ENCODE measurements at regions of chr16 and their contacts with region 1.

Region 1: DNA sequence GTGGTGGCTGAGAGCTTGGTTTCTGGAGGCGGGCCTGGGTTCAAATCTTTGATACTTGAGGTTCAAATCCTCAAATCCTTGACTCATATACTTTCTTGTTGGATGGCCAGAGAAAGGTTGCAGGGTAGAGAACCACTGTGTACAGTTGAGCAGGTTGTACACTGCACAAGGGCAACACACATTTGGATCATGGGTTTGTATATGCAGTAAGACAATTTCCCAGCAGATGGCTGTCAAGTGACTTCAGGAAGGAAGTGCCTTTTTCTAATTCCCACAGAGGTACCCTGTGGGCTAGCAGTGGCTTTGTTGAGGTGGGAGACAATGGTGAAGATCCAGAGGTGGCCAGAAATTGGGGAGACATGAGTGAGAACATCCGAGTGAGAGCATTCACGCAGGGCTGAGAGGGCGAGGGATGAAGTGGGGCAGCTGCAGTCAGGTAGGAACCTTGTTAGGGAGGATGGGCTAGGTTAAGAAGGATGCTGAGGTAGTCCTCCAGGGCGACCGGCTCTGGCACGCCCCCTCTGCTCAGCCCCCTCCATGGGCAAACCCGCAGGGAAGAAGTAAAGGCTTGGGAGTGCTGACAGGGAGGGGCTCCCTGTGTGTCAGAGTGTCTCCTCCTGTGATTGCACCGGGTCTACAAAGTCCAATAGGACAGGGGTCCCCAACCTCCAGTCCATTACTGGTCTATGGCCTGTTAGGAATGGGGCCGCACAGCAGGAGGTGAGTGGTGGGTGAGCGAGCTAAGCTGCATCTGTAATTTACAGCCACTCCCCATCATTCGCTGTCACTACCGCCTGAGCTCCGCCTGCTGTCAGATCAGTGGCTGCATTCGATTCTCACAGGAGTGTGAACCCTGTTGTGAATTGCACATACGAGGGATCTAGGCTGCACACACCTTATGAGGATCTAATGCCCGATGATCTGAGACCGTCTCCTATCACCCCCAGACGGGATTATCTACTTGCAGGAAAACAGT is 2.7 kb downstream of the C16orf89 start:
- DNase-seq: no peak
- H3K4me3 ChIP-seq: no peak overlapping the region
- H3K27ac ChIP-seq: no peak overlapping the region
- H3K4me1 ChIP-seq: no peaks in the 10 kb centered on the region
- H3K27me3 ChIP-seq: peaks cover 55% of the 10 kb centered on the region
- CTCF ChIP-seq: no peak

Region 2: GRCh38 chr16:4984174-4985000 is 78.7 kb before region 1 on chr16:
- CTCF ChIA-PET with region 1: interaction called, 14 read pairs
- POLR2A ChIA-PET with region 1: no interaction called
- intact Hi-C with region 1: no loop called
- DNase-seq: no peak
- H3K4me3 ChIP-seq: no peak overlapping the region
- H3K27ac ChIP-seq: no peak overlapping the region
- H3K4me1 ChIP-seq: no peaks in the 10 kb centered on the region
- H3K27me3 ChIP-seq: peaks cover 45% of the 10 kb centered on the region
- CTCF ChIP-seq: no peak

Region 3: DNA sequence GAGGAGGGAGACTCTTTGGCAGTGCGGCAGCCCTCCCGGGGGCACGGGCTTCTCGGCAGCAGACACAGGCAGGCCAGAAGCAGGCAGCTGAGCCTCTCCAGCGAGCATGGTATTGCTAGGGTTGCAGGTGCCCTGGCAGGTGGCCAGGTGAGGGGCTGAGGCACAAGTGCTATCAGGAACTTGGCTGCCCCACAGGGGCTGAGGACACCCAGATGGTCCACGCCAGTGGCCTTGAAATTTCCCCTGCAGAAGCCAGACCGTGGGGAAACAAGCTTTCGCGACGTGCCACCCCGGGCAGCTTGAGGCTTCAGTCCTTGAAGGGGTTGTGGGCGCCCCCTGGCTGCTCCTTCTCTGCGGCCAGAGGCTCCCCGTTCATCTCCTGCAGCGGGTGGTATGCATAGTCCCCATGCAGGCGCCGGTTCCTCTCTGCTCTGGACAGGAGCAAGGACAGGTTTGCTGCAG is 37.9 kb before region 1 on chr16:
- CTCF ChIA-PET with region 1: no interaction called
- POLR2A ChIA-PET with region 1: no interaction called
- intact Hi-C with region 1: loop called (anchors 1 kb)
- DNase-seq: no peak
- H3K4me3 ChIP-seq: no peak overlapping the region
- H3K27ac ChIP-seq: no peak overlapping the region
- H3K4me1 ChIP-seq: no peaks in the 10 kb centered on the region
- H3K27me3 ChIP-seq: no peaks in the 10 kb centered on the region
- CTCF ChIP-seq: no peak

Measured in PC-9 (cell line).